ENCODE measurements at regions of chr11 and their contacts with region 1.

Region 1: GRCh38 chr11:26753723-26754504 is 32.1 kb upstream of the SLC5A12 start:
- DNase-seq: peak; percentile 56
- ATAC-seq: peak; percentile 91
- H3K4me3 ChIP-seq: no peak overlapping the region
- H3K27ac ChIP-seq: no peak overlapping the region
- H3K4me1 ChIP-seq: no peaks in the 10 kb centered on the region
- H3K27me3 ChIP-seq: no peaks in the 10 kb centered on the region
- CTCF ChIP-seq: peak; percentile 69
- EP300 ChIP-seq: no peak
- POLR2A ChIP-seq: no peak
- RAD21 ChIP-seq: peak; percentile 48; the same call in 1 of the 2 replicates

Region 2: DNA sequence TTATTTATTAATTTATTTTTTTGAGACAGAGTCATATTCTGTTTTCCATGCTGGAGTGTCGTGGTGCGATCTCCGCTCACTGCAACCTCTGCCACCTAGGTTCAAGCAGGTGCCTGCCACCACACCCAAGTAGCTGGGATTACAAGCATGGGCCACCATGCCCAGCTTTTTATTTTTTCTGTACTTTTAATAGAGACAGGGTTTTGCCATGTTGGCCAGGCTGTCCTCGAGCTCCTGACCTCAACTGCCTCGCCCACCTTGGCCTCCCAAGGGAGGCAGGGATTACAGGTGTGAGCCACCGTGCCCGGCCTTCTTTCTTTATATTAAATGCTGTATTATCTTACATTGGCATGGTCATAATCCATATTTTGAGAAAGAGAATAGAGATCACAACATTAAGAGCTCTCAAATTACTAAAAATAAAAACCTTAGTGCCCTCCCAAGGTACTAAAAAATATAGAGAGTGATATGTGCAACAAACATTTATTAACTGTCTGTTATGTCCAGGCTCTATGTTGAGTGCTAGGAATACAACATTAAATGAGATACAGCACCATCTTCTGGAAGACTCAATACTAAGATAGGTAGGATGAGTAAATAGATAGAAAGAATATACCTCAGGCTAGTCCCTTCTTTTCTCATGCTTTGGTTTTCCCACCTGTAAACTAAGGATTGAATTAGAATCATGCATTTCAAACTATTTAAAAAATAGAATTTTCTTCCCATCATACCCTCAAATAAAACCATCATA is 370.8 kb after region 1 on chr11:
- CTCF ChIA-PET with region 1: no interaction called
- POLR2A ChIA-PET with region 1: no interaction called
- in situ Hi-C with region 1: no loop called
- intact Hi-C with region 1: loop called (anchors 1 kb)
- DNase-seq: peak; percentile 4
- ATAC-seq: peak; percentile 62; the same call in 2 of the 3 replicates
- H3K4me3 ChIP-seq: no peak overlapping the region
- H3K27ac ChIP-seq: no peak overlapping the region
- H3K4me1 ChIP-seq: no peaks in the 10 kb centered on the region
- H3K27me3 ChIP-seq: no peaks in the 10 kb centered on the region
- CTCF ChIP-seq: peak; percentile 40
- EP300 ChIP-seq: no peak
- POLR2A ChIP-seq: no peak
- RAD21 ChIP-seq: no peak

Region 3: DNA sequence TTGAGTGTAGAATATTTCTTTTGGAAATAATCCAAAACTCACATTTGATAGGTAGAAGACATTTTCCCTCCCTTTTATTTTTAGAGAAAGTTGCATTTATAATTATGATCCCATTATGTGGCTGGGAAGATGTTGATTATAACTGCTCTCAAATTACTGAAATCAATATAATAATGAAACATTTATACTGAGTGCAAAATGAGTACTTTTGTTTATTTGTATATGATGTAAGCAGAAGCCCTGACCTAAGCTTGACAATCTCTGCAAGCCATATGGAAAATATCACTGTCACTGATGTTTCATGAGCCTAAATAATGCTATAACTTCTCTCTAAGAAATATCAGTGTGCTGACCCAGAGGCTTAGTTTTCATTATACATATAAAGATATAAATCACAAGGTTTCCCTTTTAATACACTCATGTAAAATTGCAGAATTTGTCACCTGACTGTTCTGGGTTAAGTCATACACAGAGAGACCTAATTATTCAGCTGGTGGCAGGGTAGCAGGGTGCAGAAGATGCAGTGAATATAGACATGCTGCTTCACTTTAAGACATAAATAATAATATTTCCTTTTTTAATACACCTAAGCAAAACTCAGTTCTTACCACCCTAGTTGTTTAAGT is 385.9 kb after region 1 on chr11:
- CTCF ChIA-PET with region 1: no interaction called
- POLR2A ChIA-PET with region 1: no interaction called
- in situ Hi-C with region 1: no loop called
- intact Hi-C with region 1: no loop called
- DNase-seq: no peak
- ATAC-seq: no peak
- H3K4me3 ChIP-seq: no peak overlapping the region
- H3K27ac ChIP-seq: no peak overlapping the region
- H3K4me1 ChIP-seq: no peaks in the 10 kb centered on the region
- H3K27me3 ChIP-seq: no peaks in the 10 kb centered on the region
- CTCF ChIP-seq: no peak
- EP300 ChIP-seq: no peak
- POLR2A ChIP-seq: no peak
- RAD21 ChIP-seq: no peak

Region 4: DNA sequence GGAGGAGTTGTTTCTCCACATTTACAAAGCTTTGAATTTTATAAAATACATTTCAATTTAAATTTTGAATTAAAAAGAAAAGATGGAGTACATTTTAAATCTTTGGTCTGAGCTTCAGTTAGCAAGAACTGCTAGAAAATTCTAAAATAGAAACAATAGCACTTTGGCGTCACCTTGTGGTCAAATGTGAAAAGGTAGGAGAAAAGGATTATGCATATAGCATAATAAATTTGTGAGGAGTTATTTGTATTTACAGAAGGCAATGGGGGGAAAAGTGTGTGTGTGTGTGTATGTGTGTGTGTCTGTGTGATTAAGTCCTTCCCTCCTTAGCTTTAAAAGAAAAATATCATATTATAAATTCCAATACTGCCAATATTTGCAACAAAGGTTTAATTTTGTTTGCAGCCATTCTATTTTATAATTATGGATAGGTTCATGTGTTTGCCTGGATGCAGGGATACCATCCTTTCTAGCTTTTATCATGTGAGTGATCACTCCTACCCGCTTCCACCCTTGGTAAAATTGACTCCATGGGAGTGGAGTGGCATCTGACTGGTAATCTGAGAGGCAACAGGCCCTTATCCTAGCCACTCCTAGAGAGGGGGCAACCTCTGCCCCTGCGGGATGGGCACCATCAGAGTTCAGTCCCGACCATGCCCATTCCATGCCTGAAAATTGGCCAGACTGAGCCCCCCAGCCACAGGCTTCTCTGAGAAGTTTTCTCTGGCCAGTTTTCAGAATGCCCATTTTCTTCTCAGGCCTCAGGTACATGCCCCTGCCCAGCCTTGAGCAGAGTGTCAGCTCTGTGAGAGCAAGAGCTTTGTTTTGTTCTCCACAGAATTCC is 732.2 kb after region 1 on chr11:
- CTCF ChIA-PET with region 1: interaction called, 3 read pairs
- POLR2A ChIA-PET with region 1: no interaction called
- in situ Hi-C with region 1: loop called (anchors 25 kb)
- intact Hi-C with region 1: loop called (anchors 1 kb)
- DNase-seq: peak; percentile 54
- ATAC-seq: peak; percentile 54
- H3K4me3 ChIP-seq: no peak overlapping the region
- H3K27ac ChIP-seq: no peak overlapping the region
- H3K4me1 ChIP-seq: peaks cover 6% of the 10 kb centered on the region; the same call in 1 of the 2 replicates
- H3K27me3 ChIP-seq: no peaks in the 10 kb centered on the region; a peak in 1 of 5 replicates
- CTCF ChIP-seq: peak; percentile 75
- EP300 ChIP-seq: no peak
- POLR2A ChIP-seq: no peak
- RAD21 ChIP-seq: peak; percentile 79